Heart left ventricle (tissue), 16 donors: ENCODE measurements at regions of chr22 and their contacts with region 1.

Region 1: GRCh38 chr22:35705141-35705540 is 12.5 kb upstream of the APOL5 start:
- DNase-seq: no peak
- ATAC-seq: no peak
- H3K4me3 ChIP-seq: no peak overlapping the region
- H3K27ac ChIP-seq: no peak overlapping the region
- H3K4me1 ChIP-seq: peaks cover 0 to 4% (median 0%) of the 10 kb centered on the region in 12 donors
- H3K27me3 ChIP-seq: no peaks in the 10 kb centered on the region
- CTCF ChIP-seq: no peak
- POLR2A ChIP-seq: no peak

Region 2: GRCh38 chr22:35620624-35621251 is 84.4 kb before region 1 on chr22:
- intact Hi-C with region 1: no loop called
- DNase-seq: peak in 4 of 5 donors; percentile 61 to 80 (median 64)
- ATAC-seq: peak; percentile 59 to 76 (median 68)
- H3K4me3 ChIP-seq: peak overlapping the region in 2 of 12 donors; percentile 1 to 20
- H3K27ac ChIP-seq: peak overlapping the region; percentile 61 to 96 (median 87)
- H3K4me1 ChIP-seq: peaks cover 0 to 49% (median 23%) of the 10 kb centered on the region in 12 donors
- H3K27me3 ChIP-seq: no peaks in the 10 kb centered on the region
- CTCF ChIP-seq: no peak
- POLR2A ChIP-seq: peak in 1 of 2 donors; percentile 35

Region 3: GRCh38 chr22:35660291-35661127 is 44.6 kb before region 1 on chr22:
- intact Hi-C with region 1: no loop called
- DNase-seq: no peak
- ATAC-seq: peak in 1 of 4 donors; percentile 56
- H3K4me3 ChIP-seq: no peak overlapping the region
- H3K27ac ChIP-seq: peak overlapping the region in 3 of 12 donors; percentile 27 to 82 (median 32)
- H3K4me1 ChIP-seq: peaks cover 0 to 57% (median 8%) of the 10 kb centered on the region in 12 donors
- H3K27me3 ChIP-seq: no peaks in the 10 kb centered on the region
- CTCF ChIP-seq: no peak
- POLR2A ChIP-seq: no peak

Region 4: GRCh38 chr22:35761037-35761436 is 55.9 kb after region 1 on chr22:
- intact Hi-C with region 1: loop called in 1 of 10 experiments (anchors 10 kb)
- DNase-seq: no peak
- ATAC-seq: peak in 2 of 4 donors; percentile 57
- H3K4me3 ChIP-seq: no peak overlapping the region
- H3K27ac ChIP-seq: no peak overlapping the region
- H3K4me1 ChIP-seq: peaks cover 0 to 16% (median 1%) of the 10 kb centered on the region in 12 donors
- H3K27me3 ChIP-seq: no peaks in the 10 kb centered on the region
- CTCF ChIP-seq: peak in 11 of 12 donors; percentile 12 to 51 (median 30)
- POLR2A ChIP-seq: no peak